ENCODE measurements at regions of chr14 and their contacts with region 1.

Region 1: DNA sequence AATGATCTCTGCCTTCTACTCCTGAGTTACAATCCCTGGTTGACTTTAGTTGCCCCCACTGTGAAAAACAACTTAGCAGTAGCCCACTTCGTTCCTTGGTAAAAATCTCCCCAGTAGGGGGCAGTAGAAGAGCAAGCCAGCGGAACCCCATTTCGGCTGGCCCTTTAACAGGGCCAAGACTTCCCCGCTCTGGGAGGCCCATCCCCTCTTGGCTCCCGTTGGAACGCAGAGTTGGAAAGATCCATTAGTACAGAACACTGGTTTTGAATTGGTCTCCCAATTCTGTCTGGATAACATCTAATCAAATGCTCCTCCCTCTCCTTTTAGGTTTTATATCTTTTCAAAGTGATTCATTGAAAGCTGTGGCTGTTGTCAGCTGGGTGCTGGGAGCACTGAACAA is 1133.3 kb downstream of the BCL11B start:
- DNase-seq: peak; percentile 34 to 88 (median 72)
- ATAC-seq: peak; percentile 52
- H3K4me3 ChIP-seq: peak overlapping the region; percentile 2 to 56
- H3K4me3 Mint-ChIP-seq: peak overlapping the region; percentile 89
- H3K27ac ChIP-seq: peak overlapping the region; percentile 45 to 50
- H3K27ac Mint-ChIP-seq: peak overlapping the region; percentile 92
- H3K4me1 ChIP-seq: peaks cover 88% of the 10 kb centered on the region
- H3K4me1 Mint-ChIP-seq: peaks cover 91% of the 10 kb centered on the region
- H3K27me3 ChIP-seq: no peaks in the 10 kb centered on the region
- H3K27me3 Mint-ChIP-seq: no peaks in the 10 kb centered on the region
- CTCF ChIP-seq: peak; percentile 82

Region 2: GRCh38 chr14:97299661-97300060 is 839.0 kb before region 1 on chr14:
- CTCF ChIA-PET with region 1: interaction called, 4 read pairs
- POLR2A ChIA-PET with region 1: no interaction called
- intact Hi-C with region 1: loop called in 1 of 2 experiments (anchors 2 kb)
- DNase-seq: peak in 7 of 9 experiments; percentile 9 to 64 (median 29)
- ATAC-seq: no peak
- H3K4me3 ChIP-seq: no peak overlapping the region
- H3K4me3 Mint-ChIP-seq: no peak overlapping the region
- H3K27ac ChIP-seq: no peak overlapping the region
- H3K27ac Mint-ChIP-seq: no peak overlapping the region
- H3K4me1 ChIP-seq: peaks cover 4% of the 10 kb centered on the region
- H3K4me1 Mint-ChIP-seq: peaks cover 16% of the 10 kb centered on the region
- H3K27me3 ChIP-seq: no peaks in the 10 kb centered on the region
- H3K27me3 Mint-ChIP-seq: peaks cover 1% of the 10 kb centered on the region
- CTCF ChIP-seq: no peak

Region 3: DNA sequence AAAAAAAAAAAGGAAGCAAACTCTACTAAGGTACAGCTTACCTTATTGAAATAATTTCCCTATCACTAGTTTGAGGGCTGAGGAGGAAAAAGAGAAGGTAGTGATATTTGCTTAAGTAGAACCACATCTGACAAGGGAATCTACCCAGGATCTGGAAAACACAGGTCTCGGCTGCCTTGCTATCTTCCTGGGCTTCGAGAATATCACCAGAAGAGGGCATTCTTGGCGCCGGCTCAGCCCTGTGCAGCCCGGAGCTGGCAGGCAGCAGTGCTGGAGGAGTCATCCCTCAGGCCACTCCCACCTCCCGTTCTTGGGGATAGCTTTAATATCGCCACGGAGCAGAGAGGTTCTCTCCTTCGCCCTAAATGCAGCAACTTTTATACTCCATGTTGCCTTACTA is 160.3 kb before region 1 on chr14:
- CTCF ChIA-PET with region 1: interaction called, 82 read pairs
- POLR2A ChIA-PET with region 1: interaction called, 85 read pairs
- intact Hi-C with region 1: loop called (anchors 1 to 2 kb)
- DNase-seq: peak; percentile 46 to 88 (median 80)
- ATAC-seq: peak; percentile 76
- H3K4me3 ChIP-seq: peak overlapping the region; percentile 66 to 75
- H3K4me3 Mint-ChIP-seq: peak overlapping the region; percentile 82
- H3K27ac ChIP-seq: peak overlapping the region; percentile 73 to 77
- H3K27ac Mint-ChIP-seq: peak overlapping the region; percentile 88
- H3K4me1 ChIP-seq: peaks cover 37% of the 10 kb centered on the region
- H3K4me1 Mint-ChIP-seq: peaks cover 62% of the 10 kb centered on the region
- H3K27me3 ChIP-seq: no peaks in the 10 kb centered on the region
- H3K27me3 Mint-ChIP-seq: no peaks in the 10 kb centered on the region
- CTCF ChIP-seq: peak; percentile 53

Region 4: DNA sequence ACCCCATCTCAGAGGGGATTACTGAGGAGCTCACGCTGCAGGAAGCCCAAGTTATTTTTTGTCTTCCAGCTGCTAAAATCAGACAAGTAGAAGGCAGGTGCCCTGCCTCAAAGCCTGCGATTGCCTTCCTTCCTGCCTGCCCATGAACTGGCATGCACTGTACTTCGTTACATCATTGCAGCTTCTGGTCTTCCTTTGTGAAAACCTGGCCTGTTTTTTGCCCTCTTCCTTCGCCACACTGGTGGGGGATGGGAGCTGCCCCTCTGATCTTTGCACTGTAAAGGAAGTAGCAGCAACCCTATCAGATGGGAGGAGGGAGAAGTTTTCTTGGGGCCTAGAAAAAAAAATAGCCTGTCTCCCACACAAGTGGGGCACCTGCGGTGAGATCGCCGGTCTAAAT is 34.6 kb after region 1 on chr14:
- CTCF ChIA-PET with region 1: interaction called, 76 read pairs
- POLR2A ChIA-PET with region 1: interaction called, 26 read pairs
- intact Hi-C with region 1: loop called in 1 of 2 experiments (anchors 1 kb)
- DNase-seq: peak; percentile 39 to 91 (median 77)
- ATAC-seq: peak; percentile 60
- H3K4me3 ChIP-seq: peak overlapping the region; percentile 18 to 28
- H3K4me3 Mint-ChIP-seq: peak overlapping the region; percentile 76
- H3K27ac ChIP-seq: peak overlapping the region; percentile 49 to 76
- H3K27ac Mint-ChIP-seq: peak overlapping the region; percentile 96
- H3K4me1 ChIP-seq: peaks cover 100% of the 10 kb centered on the region
- H3K4me1 Mint-ChIP-seq: peaks cover 99% of the 10 kb centered on the region
- H3K27me3 ChIP-seq: no peaks in the 10 kb centered on the region
- H3K27me3 Mint-ChIP-seq: no peaks in the 10 kb centered on the region
- CTCF ChIP-seq: no peak

Region 5: DNA sequence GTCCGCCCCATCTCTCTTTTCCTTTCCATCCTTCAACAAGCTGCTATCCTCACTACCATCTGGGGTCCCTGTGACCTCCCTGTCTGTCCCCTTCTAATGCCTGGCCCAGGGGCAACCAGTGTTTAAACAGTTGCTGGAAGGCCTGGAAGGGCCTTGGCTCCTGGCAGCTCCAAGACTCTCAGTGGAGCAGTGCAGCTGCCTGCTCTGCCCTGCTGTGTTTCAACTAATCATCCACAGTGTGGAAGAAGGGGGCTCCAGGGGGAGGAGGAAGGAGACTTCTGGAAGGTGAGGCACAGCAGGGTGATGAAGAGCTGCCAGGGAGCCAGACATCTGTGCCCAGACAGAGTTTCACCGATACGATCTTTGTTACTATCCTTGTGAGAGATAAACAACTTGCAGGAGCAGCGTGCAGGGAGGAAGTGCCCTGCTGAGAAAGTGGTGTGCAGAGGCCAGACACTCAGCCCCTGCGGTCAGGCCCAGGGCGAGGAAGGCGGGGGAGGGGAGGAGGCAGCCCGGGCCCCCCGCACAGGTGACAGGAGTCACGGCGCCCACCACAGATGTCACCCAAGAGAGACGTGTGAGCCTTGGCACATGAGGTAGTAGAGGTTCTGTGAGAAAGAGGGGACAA is 71.5 kb after region 1 on chr14:
- CTCF ChIA-PET with region 1: interaction called, 14 read pairs
- POLR2A ChIA-PET with region 1: interaction called, 5 read pairs
- intact Hi-C with region 1: no loop called
- DNase-seq: peak; percentile 25 to 87 (median 75)
- ATAC-seq: peak; percentile 72
- H3K4me3 ChIP-seq: peak overlapping the region; percentile 7 to 20
- H3K4me3 Mint-ChIP-seq: peak overlapping the region; percentile 68
- H3K27ac ChIP-seq: peak overlapping the region; percentile 44 to 68
- H3K27ac Mint-ChIP-seq: peak overlapping the region; percentile 92
- H3K4me1 ChIP-seq: peaks cover 83% of the 10 kb centered on the region
- H3K4me1 Mint-ChIP-seq: peaks cover 97% of the 10 kb centered on the region
- H3K27me3 ChIP-seq: no peaks in the 10 kb centered on the region
- H3K27me3 Mint-ChIP-seq: no peaks in the 10 kb centered on the region
- CTCF ChIP-seq: no peak

Region 6: DNA sequence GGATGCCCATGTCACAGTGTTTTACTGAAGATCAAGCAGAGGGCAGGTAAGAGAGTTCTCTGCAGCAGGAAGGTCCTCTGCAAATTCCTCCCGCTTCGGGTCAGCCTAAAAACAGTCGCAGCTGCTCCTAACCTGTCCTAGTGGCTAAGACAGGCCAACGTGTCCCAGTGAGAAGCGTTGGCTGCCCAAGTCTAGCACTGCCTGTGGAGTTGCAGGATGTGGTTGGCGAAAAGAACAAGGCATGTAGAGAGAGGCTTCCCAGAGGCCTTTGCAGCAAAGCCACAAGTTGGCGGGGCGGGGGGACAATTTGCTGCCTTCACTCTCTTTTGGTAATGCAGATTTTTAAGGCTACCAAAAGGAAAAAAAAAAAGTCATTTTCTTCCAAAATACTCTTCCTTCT is 793.2 kb after region 1 on chr14:
- CTCF ChIA-PET with region 1: interaction called, 4 read pairs
- POLR2A ChIA-PET with region 1: no interaction called
- intact Hi-C with region 1: loop called in 1 of 2 experiments (anchors 10 kb)
- DNase-seq: peak; percentile 57 to 89 (median 80)
- ATAC-seq: peak; percentile 96
- H3K4me3 ChIP-seq: peak overlapping the region; percentile 15 to 16
- H3K4me3 Mint-ChIP-seq: peak overlapping the region; percentile 74
- H3K27ac ChIP-seq: peak overlapping the region in 1 of 2 experiments; percentile 22
- H3K27ac Mint-ChIP-seq: peak overlapping the region; percentile 92
- H3K4me1 ChIP-seq: peaks cover 79% of the 10 kb centered on the region
- H3K4me1 Mint-ChIP-seq: peaks cover 93% of the 10 kb centered on the region
- H3K27me3 ChIP-seq: no peaks in the 10 kb centered on the region
- H3K27me3 Mint-ChIP-seq: no peaks in the 10 kb centered on the region
- CTCF ChIP-seq: no peak

Measured in CD8-positive, alpha-beta T cell (primary cell).